Colonic mucosa (tissue), 4 donors: ENCODE measurements at regions of chr17 and their contacts with region 1.

Region 1: GRCh38 chr17:43940630-43941029 is 1.6 kb downstream of the PPY start:
- DNase-seq: no peak
- H3K4me3 ChIP-seq: no peak overlapping the region
- H3K27ac ChIP-seq: no peak overlapping the region
- H3K4me1 ChIP-seq: no peaks in the 10 kb centered on the region
- H3K27me3 ChIP-seq: peaks cover 4% of the 10 kb centered on the region
- CTCF ChIP-seq: no peak

Region 2: DNA sequence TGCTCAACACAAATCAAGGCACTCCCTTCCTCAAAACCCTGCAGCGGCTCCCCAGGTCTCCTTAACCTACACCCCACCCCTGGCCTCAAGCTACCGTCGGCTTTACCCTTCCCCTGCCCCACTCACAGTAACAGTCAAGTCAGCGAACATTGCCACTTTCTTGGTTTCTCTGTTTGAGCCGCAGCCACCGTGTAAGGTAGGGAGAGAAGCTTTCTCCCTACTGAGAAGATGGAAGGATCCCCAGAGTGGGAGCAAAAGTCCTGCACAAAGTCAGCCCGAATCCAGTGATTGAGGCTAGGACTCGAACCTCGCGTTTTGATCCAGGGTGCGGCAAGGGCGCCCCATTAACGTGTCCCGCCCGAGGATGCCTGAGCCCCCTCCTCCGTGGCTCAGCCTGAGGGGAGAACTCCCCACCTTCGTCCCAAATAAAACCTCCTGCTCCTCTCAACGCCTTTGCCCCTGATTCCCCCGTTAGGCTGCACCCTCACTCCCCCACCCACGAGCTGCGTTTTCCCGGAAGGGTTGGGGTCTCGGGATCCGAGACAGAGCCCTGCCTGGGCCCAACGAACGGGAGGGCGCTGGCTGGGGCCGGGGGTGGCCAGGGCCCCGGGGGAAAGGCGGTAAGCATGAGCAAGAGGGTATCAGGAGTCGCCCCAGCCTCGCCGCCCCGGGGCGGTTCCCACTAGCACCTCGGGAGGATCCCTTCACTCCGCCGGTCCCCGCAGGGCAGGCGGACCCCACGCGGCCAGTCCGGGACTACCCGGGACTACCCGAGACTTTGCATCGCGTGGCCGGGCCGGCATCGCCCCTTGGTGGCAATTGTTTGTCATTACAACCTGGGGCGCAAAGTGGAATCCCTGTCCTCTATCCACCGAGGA is 53.9 kb after region 1 on chr17:
- intact Hi-C with region 1: loop called (anchors 5 kb)
- DNase-seq: peak; percentile 60
- H3K4me3 ChIP-seq: peak overlapping the region; percentile 3
- H3K27ac ChIP-seq: no peak overlapping the region
- H3K4me1 ChIP-seq: no peaks in the 10 kb centered on the region
- H3K27me3 ChIP-seq: peaks cover 15% of the 10 kb centered on the region
- CTCF ChIP-seq: peak; percentile 82

Region 3: DNA sequence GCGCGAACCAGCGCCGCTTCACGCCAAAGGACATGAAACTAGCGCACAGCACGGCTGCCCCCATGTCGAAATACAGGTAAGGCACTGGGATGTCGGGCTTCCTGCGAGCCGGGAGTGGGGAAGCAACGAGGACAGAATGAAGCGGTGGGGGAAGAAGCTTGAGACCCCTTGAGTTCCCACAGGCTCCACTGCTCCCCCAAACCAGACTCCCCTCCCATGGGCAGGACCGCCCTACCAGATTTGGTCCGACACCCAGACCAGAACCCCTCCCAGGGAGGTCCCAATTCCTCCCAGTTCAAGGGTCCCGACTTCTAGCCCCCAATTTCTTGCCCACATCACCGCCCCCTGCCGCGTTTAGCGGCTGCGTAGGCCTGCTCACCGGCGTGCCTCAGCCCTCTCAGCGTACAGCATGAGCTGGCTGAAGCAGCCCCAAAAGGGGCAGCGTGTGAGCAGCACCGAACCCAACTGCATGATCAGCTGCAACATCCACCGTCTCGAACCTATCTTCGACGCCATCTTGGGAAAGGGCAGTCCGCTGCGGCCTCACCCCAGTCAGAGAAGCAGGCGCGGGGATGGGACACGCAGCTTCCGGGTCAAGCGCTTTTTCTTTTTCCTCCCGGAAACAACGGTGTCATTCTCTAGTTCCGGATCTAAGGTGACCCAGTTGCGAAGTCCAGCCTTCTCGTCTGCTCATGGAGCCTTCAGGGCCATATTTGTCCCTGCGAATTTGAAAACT is 74.0 kb after region 1 on chr17 and contains the start of gene TMEM101:
- intact Hi-C with region 1: no loop called
- DNase-seq: peak; percentile 92
- H3K4me3 ChIP-seq: peak within 1 kb of the TSS; percentile 78
- H3K27ac ChIP-seq: peak within 1 kb of the TSS; percentile 8
- H3K4me1 ChIP-seq: peaks cover 3% of the 10 kb centered on the region
- H3K27me3 ChIP-seq: no peaks in the 10 kb centered on the region
- CTCF ChIP-seq: no peak
- total RNA-seq, gene TMEM101: 26.8 to 33.7 TPM

Region 4: GRCh38 chr17:44044067-44044466 is 103.4 kb after region 1 on chr17:
- intact Hi-C with region 1: loop called (anchors 5 kb)
- DNase-seq: no peak
- H3K4me3 ChIP-seq: no peak overlapping the region
- H3K27ac ChIP-seq: peak overlapping the region; percentile 17
- H3K4me1 ChIP-seq: no peaks in the 10 kb centered on the region
- H3K27me3 ChIP-seq: no peaks in the 10 kb centered on the region
- CTCF ChIP-seq: no peak